ENCODE measurements at regions of chr12 and their contacts with region 1.

Region 1: DNA sequence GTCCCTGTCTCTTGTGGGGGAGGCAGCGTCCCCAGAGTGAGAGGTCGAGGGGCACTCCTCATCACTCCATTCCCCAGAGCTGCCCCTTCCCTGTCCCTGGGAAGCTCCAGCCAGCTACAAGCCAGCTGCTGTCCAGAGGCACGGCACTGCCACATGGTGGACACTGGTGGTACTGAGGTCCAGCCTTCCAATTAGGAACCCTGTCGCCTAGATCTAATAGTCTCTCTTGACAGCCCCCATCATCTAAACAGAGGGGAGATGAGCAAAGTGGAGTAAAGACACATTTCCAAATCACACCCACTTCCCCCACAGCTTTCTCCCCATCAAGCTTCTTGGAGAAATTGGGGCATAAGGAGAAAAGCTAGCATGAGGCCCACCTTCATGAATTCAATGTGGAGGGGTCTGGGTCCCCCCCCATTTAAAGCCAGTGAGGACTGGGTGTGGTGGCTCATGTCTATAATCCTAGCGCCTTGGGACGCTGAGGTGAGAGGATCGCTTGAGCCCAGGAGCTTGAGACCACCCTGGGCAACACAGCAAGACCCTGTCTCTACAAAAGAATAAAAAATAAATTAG is 2.1 kb upstream of the INHBE start:
- DNase-seq: no peak
- H3K4me3 ChIP-seq: no peak overlapping the region
- H3K27me3 ChIP-seq: no peaks in the 10 kb centered on the region
- CTCF ChIP-seq: peak; percentile 96

Region 2: DNA sequence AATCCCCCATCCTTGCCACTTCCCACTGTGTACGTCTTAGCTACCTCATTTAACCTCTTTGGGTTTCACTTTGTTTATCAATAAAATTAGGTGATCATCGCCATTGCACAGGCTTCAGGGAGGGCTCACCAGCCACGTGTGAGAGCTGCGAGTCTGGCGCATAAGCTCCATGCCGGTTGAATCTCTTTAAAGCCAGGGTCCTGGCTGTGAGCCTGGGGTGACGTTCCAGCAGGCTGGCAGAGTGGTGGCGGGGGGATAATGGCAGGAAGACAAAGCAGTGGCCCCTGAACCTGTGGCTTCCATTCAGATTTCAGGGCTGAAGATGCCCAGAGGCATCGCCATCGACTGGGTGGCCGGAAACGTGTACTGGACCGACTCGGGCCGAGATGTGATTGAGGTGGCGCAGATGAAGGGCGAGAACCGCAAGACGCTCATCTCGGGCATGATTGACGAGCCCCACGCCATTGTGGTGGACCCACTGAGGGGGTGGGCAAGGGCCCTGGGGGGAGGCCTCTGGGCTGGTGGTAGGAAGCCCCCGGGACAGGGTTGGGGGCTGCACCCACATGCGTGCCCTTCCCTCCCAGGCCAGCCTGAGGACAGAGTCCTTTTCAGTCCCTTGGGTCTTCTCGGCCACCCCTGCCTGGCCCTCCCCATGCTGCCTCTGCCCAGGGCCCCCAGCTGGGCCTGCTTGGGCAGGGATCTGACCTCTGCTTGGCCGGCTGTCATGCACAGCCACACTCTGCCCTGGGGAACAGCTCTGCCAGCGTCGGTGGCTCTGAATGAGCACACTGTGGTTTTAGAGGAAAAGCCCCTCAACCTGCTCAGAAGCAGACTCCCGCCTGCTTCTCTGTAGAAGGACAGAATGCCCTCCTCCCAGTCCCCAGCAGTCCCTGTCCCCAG is 245.0 kb before region 1 on chr12:
- CTCF ChIA-PET with region 1: no interaction called
- POLR2A ChIA-PET with region 1: no interaction called
- DNase-seq: no peak
- H3K4me3 ChIP-seq: no peak overlapping the region
- H3K27me3 ChIP-seq: no peaks in the 10 kb centered on the region
- CTCF ChIP-seq: no peak

Region 3: DNA sequence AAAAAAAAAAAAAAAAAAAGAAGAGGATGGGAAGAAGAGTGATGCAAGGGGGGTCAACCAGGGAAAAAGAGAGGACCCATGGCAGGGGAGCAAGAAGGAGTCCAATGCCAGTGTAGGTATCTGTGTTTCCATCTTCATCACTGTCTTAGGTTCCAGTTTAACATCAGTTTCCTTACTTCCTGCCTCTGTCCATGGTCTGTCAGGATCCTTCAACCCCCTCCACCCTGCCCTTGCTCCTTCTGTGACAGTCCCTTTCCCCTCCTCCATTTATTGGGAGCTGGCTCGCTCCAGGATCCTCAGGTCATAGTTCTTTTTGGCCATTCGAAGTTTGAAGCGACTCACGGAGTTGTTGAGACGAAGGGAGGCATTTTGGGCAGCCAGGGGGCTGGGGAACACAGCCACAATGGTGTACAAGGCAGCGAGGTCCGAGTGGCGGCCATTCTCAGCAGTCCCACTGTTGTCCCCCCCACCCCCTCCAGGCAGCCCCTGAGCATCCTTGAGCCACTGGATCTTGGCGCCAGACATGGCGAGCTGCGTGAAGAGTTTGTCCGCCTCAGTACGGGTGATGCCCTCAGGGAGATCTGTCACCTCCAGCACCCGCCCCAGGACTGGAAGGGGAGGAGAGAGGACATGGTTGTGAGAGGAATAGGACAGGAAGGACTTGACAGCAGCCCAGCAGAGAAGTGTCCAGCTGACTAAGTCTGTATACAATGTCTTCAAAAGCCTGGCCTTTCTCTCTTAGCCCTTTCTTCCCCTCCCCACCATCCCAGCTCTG is 198.3 kb before region 1 on chr12:
- CTCF ChIA-PET with region 1: interaction called, 142 read pairs
- POLR2A ChIA-PET with region 1: interaction called, 3 read pairs
- DNase-seq: no peak
- H3K4me3 ChIP-seq: no peak overlapping the region
- H3K27me3 ChIP-seq: no peaks in the 10 kb centered on the region
- CTCF ChIP-seq: no peak

Region 4: DNA sequence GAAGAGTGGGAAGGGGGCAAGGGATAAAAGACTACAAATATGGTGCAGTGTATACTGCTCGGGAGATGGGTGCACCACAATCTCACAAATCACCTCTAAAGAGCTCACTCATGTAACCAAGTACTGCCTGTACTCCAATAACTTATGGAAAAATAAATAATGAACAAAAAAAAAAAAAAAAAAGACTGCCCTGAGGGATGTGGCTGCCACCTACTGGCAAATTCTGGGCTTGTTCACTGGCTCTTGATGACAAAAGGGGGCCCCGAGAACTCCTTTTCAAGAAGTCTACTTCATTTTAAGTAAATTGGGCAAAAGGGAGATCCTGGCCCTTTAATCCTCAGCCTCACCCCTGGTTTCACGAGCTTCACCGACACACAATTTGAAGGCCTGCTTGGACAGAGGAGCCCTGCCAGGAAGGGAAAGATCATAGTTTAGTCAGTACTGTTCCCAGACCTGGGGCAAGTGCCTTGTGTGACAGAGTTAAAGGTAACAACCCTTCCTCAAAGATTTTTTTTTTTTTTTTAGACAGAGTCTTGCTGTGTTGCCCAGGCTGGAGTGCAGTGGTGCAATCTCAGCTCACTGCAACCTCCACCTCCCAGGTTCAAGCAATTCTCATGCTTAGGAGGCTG is 176.0 kb before region 1 on chr12:
- CTCF ChIA-PET with region 1: interaction called, 23 read pairs
- POLR2A ChIA-PET with region 1: no interaction called
- DNase-seq: no peak
- H3K4me3 ChIP-seq: no peak overlapping the region
- H3K27me3 ChIP-seq: no peaks in the 10 kb centered on the region
- CTCF ChIP-seq: peak; percentile 61

Region 5: DNA sequence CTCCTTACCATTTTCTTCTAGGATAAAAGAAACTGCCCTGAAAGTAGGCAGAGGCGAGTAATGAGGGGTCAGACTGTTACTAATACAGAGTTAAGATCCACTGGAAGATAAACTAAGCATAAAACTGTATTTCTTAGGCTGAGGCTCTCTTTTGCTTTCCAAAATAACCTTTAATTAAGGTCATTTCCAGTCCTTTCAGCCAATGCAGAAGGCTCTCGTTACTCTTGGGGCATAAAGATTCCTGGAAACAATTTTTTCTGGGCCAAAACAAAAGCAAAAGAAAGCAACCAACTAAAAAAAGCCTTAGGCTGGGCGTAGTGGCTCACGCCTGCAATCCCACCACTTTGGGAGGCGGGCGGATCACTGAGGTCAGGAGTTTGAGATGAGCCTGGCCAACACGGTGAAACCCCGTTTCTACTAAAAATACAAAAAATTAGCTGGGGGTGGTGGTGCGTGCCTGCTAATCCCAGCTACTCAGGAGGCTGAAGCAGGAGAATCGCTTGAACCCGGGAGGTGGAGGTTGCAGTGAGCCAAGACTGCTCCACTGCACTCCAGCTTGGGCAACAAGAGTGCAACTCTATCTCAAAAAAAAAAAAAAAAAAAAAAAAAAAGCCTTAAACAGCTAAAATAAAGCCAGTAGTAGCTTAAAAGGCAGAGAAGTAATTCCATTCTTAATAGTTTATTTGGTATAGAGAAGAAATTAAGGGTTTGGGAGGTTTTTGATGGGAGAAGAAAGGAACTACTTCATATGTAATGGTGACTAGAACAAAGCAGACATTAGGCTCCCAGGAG is 133.1 kb before region 1 on chr12:
- CTCF ChIA-PET with region 1: interaction called, 411 read pairs
- POLR2A ChIA-PET with region 1: interaction called, 3 read pairs
- DNase-seq: no peak
- H3K4me3 ChIP-seq: no peak overlapping the region
- H3K27me3 ChIP-seq: no peaks in the 10 kb centered on the region
- CTCF ChIP-seq: no peak

Region 6: DNA sequence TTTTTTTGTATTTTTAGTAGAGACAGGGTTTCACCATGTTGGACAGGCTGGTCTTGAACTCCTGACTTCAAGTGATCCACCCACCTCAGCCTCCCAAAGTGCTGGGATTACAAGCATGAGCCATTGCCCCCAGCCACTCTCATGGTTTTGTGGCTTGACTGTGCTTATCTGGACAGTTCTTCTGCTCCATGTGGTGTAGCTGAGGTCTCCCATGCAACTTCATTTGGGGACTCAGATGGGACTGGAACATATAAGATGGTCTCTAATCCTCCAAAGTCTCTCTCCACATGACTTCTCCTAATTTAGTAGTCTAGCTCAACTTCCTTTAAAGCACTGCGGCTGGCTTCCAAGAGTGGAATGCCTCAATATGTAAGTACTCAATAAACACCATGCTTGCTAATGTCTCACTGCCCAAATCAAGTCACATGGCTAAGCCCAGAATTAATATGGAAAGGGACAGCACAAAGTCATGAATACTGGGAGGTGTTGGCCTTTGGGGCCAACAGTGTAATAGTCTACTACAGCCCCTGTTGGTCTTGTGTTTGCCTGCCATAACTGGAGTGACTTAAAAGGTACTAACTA is 11.1 kb before region 1 on chr12:
- CTCF ChIA-PET with region 1: interaction called, 14 read pairs
- POLR2A ChIA-PET with region 1: no interaction called
- DNase-seq: no peak
- H3K4me3 ChIP-seq: no peak overlapping the region
- H3K27me3 ChIP-seq: no peaks in the 10 kb centered on the region
- CTCF ChIP-seq: no peak

Region 7: DNA sequence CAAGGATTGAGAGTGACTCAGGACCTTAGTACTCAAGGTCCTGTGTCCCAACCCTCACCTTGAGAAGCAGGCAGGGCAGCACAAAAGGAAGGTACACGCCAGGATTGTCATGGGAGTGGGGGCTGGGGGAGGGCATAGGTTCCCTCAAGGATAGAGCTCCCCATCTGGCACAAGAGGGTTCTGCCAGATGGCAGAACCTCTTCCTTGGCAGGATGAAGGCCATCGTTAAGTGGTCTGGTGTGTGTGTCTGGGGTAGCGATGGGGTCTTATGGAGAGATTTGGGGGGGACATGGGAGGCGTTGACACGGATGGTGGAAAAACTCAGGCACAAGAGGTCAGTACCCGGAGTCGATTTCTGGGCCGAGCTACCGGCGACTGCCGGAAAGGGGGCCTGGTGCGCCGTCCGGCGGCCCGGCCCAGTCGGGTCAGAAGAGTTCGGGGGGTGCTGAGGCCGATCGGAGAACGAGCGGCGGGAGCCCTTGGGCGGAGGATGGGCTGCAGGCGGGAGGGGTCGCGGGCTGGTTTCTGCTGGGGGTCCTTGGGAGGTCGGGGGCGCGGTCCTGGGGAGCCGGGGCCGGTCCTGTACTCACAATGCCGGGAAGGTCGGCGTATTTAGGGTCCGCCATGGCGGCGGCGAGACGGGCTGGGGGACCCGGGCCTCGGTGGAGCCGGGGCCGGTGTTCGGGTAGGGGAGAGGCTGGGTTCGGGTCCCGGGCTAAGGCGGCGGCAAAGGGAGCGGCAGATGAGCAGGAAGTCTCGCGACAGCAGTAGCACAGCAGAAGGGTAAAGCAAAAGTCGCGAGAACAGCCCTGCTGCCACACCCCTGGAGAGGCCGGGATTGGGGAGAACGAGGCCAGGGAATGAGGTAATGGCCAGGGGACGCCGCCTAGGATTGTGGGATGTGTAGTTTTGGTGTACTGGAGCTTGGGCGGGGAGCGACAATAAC is 93.7 kb after region 1 on chr12 and contains the start of gene DCTN2:
- CTCF ChIA-PET with region 1: no interaction called
- POLR2A ChIA-PET with region 1: no interaction called
- DNase-seq: peak; percentile 84
- H3K4me3 ChIP-seq: peak within 1 kb of the TSS; percentile 100
- H3K27me3 ChIP-seq: peaks cover 6% of the 10 kb centered on the region
- CTCF ChIP-seq: peak; percentile 34
- polyA plus RNA-seq, gene DCTN2: 133 and 167 TPM in 2 replicates

Measured in BJ (cell line).